ENCODE measurements at regions of chr7 and their contacts with region 1.

Region 1: DNA sequence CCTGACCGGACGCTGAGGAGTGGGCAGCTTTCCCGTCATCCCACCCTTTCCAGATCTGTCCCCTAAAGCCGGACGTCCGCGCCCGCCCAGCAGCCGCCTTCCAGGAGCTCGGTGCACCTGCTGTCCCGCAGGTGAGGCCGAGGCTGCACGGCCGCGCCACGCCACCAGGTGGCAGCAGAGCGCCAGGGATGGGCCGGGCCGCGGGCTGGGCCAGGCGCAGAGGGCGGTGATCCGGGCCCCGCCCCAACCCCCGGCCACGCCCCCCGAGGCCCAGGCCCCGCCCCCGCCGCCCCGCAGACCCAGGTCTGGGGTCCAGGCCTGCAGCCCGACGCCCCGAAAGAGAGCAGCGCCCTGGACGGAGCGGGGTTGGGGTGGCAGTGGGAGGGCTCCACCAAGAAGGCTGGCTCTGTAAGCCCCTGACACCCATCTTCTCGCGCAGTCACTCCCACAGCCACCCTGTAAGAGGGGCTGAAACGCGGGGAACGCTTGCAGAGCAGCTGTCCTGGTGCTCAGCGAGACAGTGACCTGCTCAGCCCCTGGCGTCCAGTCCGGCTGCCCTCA is 32.2 kb downstream of the FOXL3 start:
- DNase-seq: peak; percentile 84 to 97 (median 93)
- ATAC-seq: peak; percentile 79
- H3K4me3 ChIP-seq: no peak overlapping the region
- H3K4me1 ChIP-seq: peaks cover 50% of the 10 kb centered on the region
- CTCF ChIP-seq: peak; percentile 94

Region 2: DNA sequence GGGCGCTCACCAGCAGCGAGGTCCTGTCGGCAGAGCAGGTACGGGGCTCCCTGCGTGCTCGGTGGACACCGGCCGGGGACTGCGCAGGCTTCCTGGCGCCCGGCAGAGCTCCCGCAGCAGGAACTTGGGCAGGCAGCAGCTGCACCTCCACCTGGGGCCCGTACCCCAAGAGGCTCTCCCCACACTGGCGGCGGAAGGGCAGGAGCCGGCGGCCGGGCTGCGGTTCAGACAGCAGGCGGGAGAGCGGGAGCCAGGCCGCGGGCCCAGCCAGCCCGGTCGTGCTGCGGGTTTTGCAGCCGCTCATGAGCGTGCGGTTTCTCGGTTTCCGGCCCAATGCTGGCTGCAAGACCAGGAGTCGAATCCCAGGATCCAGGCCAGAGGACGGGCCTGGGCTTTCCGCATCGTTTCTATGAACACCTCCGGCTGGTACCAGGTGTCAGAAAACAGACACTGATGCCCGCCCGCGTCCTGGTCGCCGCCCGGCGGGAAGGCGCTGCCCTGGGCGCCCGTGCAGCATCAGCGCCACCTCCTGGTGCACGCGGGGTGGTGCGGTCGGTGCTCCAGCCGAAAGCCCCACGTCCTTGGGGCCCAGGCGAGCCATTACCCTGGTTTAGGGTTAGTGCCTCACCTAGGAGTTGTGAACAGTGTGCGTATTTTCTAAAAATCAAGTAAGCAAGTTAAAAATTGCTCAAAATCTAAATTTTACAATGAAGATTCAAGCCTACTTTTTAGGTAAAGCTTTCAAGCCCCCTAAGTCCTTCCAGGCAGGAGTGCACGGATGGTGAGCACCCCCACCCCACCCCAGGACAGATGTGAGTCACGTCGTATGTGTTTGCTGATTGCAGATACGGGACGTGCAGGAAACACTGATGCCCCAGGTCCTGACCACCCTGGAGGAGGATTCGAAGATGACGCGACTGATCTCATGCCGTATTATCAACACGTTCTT is 452.2 kb after region 1 on chr7:
- intact Hi-C with region 1: loop called (anchors 5 to 10 kb)
- DNase-seq: peak; percentile 66 to 83 (median 75)
- ATAC-seq: peak; percentile 90
- H3K4me3 ChIP-seq: no peak overlapping the region
- H3K4me1 ChIP-seq: no peaks in the 10 kb centered on the region
- CTCF ChIP-seq: peak; percentile 97

Region 3: DNA sequence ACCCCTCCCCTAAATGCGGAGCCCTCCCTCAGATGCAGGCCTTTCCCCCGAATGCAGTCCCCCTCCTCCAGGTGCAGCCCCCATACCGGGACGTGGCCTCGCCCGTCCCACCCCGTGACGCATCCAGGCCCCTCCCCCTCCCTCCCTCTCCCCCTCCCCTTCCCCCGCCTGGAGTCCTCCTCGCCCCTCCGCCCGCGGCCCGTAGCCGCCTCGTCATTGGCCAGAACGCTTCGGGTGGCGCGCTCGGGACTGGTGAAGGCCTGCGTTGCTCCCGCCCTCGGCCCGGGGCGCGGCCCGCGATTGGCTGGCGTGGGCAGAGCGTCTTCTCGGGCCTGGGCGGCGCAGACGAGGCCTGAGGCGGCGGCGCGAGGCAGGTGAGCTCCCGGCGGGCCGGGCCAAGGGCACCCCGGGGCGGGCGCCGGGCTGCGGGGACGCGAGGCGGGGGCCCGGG is 494.1 kb after region 1 on chr7:
- intact Hi-C with region 1: no loop called
- DNase-seq: peak; percentile 97 to 99 (median 99)
- ATAC-seq: peak; percentile 97
- H3K4me3 ChIP-seq: peak overlapping the region; percentile 81
- H3K4me1 ChIP-seq: peaks cover 14% of the 10 kb centered on the region
- CTCF ChIP-seq: no peak